ENCODE measurements at regions of chr12 and their contacts with region 1.

Region 1: DNA sequence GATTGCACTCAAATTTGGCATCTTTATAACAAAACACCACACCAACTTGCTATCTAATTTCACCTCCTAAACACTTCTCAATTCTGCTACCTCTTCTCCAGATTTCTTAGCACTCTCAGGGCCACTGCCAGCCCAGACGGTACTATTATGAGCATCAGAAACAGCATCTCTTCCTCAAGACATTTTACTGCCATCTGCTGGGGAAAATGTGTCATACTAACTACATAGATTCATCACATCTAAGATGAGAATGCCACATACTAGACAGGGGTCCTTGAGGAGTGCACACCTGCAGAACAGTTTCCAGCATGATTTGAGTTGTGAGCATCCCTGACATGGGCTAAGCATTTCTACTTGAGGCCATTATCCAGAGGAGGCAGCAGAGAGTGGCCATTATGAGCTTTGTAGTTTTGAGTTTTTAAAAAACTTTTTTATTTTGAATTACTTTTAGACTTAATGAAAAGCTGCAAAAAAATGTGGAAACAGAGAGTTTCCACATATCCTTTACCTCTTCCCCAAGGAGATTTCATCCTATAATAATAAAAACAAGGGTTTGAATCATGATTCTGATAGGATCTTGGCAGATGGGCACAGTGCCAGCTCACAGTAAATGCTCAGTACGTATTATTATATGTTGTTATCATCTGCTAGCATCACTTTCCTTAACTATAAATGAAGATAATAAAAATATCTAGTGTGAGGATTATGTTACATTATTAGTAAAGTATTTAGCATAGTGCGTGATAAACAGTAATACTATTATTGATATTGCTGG is 15.2 kb upstream of the GRIP1 start:
- DNase-seq: peak in 4 of 5 donors; percentile 33 to 48 (median 36)
- H3K4me3 ChIP-seq: no peak overlapping the region
- H3K4me3 Mint-ChIP-seq: no peak overlapping the region
- H3K27ac ChIP-seq: no peak overlapping the region
- H3K27ac Mint-ChIP-seq: no peak overlapping the region
- H3K4me1 ChIP-seq: no peaks in the 10 kb centered on the region
- H3K4me1 Mint-ChIP-seq: peaks cover 0 to 1% (median 0%) of the 10 kb centered on the region in 4 donors
- H3K27me3 ChIP-seq: no peaks in the 10 kb centered on the region
- H3K27me3 Mint-ChIP-seq: peaks cover 5 to 6% of the 10 kb centered on the region in 2 donors

Region 2: GRCh38 chr12:65313719-65314317 is 1380.3 kb before region 1 on chr12:
- CTCF ChIA-PET with region 1: no interaction called
- POLR2A ChIA-PET with region 1: no interaction called
- intact Hi-C with region 1: loop called (anchors 10 kb)
- DNase-seq: no peak
- H3K4me3 ChIP-seq: no peak overlapping the region
- H3K4me3 Mint-ChIP-seq: no peak overlapping the region
- H3K27ac ChIP-seq: no peak overlapping the region
- H3K27ac Mint-ChIP-seq: no peak overlapping the region
- H3K4me1 ChIP-seq: no peaks in the 10 kb centered on the region
- H3K4me1 Mint-ChIP-seq: no peaks in the 10 kb centered on the region
- H3K27me3 ChIP-seq: peaks cover 3% of the 10 kb centered on the region
- H3K27me3 Mint-ChIP-seq: peaks cover 1 to 13% of the 10 kb centered on the region in 2 donors

Region 3: GRCh38 chr12:66144791-66145754 is 549.0 kb before region 1 on chr12:
- CTCF ChIA-PET with region 1: no interaction called
- POLR2A ChIA-PET with region 1: no interaction called
- intact Hi-C with region 1: no loop called
- DNase-seq: no peak
- H3K4me3 ChIP-seq: no peak overlapping the region
- H3K4me3 Mint-ChIP-seq: no peak overlapping the region
- H3K27ac ChIP-seq: no peak overlapping the region
- H3K27ac Mint-ChIP-seq: peak overlapping the region in 6 of 7 donors; percentile 29 to 72 (median 37)
- H3K4me1 ChIP-seq: no peaks in the 10 kb centered on the region
- H3K4me1 Mint-ChIP-seq: peaks cover 4 to 14% (median 8%) of the 10 kb centered on the region in 4 donors
- H3K27me3 ChIP-seq: no peaks in the 10 kb centered on the region
- H3K27me3 Mint-ChIP-seq: no peaks in the 10 kb centered on the region

Region 4: DNA sequence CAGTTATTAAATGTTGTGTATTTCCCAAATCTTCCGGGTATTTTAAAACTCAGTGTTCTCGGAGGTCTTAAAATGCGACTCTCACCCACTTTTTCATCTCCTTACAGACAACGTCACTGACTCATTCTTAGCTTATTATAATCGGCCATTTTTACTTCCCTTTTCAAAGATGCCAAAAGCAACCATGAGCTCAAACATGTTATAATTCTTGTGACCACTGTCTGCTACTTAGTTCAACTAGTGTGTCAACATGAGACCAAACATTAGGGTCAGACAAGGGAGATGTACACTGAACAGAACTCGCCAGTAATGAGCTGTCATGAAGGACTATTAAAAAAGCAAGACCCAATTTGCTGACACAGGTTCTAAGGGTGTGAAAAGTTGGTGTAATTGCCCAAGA is 11.0 kb before region 1 on chr12:
- CTCF ChIA-PET with region 1: interaction called, 42 read pairs
- POLR2A ChIA-PET with region 1: no interaction called
- intact Hi-C with region 1: no loop called
- DNase-seq: no peak
- H3K4me3 ChIP-seq: no peak overlapping the region
- H3K4me3 Mint-ChIP-seq: no peak overlapping the region
- H3K27ac ChIP-seq: no peak overlapping the region
- H3K27ac Mint-ChIP-seq: no peak overlapping the region
- H3K4me1 ChIP-seq: no peaks in the 10 kb centered on the region
- H3K4me1 Mint-ChIP-seq: no peaks in the 10 kb centered on the region
- H3K27me3 ChIP-seq: no peaks in the 10 kb centered on the region
- H3K27me3 Mint-ChIP-seq: peaks cover 13 to 18% of the 10 kb centered on the region in 2 donors

Region 5: DNA sequence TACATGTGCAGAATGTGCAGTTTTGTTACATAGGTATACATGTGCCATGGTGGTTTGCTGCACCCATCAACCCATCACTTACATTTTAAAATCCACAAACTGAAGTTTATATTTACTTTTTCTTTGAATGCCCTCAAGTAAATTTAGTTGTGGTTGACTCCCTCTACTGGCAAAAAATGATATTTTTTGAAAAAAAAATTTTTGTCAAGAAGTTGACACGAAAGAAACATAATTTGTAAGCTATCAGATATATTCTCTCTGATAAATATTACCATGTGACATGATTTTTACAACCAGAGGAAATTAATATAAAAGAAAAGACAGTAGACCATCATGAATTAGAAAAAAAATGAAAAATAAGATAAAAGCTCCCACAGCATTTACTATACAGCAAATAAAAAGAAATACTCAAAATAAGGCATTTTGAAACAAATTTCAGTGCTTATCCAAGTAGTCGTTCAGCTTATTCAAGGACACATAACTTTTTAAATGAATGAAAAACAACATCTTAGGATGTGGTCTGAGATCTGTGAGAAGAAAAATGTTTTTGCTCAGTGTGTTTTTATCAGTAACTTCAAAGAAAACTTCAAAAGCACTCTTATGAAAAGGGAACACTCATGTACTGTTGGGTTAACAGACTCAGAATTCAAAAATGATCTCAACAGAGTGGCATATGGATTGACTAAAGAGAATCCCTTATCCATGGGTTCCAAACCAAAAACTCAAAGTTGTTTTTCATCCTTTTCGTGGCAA is 14.8 kb after region 1 on chr12:
- CTCF ChIA-PET with region 1: interaction called, 12 read pairs
- POLR2A ChIA-PET with region 1: no interaction called
- intact Hi-C with region 1: no loop called
- DNase-seq: peak in 4 of 5 donors; percentile 13 to 32 (median 18)
- H3K4me3 ChIP-seq: no peak overlapping the region
- H3K4me3 Mint-ChIP-seq: peak overlapping the region in 6 of 8 donors; percentile 3 to 63 (median 45)
- H3K27ac ChIP-seq: no peak overlapping the region
- H3K27ac Mint-ChIP-seq: peak overlapping the region in 5 of 7 donors; percentile 7 to 54 (median 19)
- H3K4me1 ChIP-seq: peaks cover 10% of the 10 kb centered on the region
- H3K4me1 Mint-ChIP-seq: peaks cover 6 to 18% (median 11%) of the 10 kb centered on the region in 4 donors
- H3K27me3 ChIP-seq: no peaks in the 10 kb centered on the region
- H3K27me3 Mint-ChIP-seq: peaks cover 4 to 6% of the 10 kb centered on the region in 2 donors